Posterior cingulate gyrus (tissue), 11 donors: ENCODE measurements at regions of chr6 and their contacts with region 1.

Region 1: DNA sequence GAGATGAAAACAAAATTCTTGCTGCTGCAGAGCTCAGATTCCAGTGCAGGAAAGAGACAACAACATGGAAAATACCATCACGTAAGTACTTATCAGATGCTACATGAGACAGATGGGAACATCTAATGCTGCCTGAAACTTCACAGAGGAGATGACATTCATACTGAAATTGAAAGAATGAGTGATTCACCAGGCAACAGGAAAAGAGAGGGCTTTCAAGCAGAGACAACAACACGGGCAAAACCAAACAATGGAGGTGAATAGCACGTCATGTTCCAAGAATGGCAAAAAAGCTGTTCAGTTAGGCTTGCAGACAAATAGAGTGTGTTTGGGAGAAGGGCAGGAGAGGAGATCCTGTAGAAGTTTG is 39.3 kb downstream of the GTF2H5 start:
- DNase-seq: no peak

Region 2: DNA sequence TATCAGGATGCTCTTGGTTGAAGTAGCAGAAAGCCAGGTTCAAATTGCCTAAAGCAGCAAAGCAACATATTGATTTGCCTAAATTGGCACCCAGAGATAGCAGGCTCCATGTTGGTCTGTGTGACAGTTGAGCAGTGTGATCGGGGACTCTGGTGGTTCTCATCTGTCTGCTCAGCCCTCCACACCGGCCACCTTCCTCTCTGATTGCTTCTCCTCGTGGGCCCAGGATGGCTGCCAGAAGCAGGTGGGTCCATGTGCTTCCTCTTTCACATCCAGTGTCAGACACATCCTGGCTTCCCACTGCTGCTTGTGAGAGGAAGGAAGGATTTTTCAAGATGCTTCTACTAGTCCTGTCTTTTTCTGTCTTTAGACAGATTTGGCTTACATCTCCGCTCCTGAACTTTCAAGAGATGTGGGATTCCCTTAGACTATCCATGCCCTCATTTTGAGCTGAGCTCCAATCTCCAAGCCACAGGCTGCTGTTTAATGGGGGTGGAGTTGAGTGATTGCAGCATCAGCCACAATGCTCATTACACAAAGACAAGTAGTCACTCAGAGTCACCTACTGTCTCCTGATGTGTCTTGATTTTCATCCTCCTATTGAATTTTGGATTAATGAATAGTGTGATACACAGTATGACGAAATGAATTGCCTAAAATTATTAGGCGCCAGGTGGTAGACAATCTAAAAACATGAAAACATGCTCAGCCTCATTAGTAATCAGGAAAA is 704.2 kb before region 1 on chr6:
- intact Hi-C with region 1: no loop called
- DNase-seq: no peak

Region 3: DNA sequence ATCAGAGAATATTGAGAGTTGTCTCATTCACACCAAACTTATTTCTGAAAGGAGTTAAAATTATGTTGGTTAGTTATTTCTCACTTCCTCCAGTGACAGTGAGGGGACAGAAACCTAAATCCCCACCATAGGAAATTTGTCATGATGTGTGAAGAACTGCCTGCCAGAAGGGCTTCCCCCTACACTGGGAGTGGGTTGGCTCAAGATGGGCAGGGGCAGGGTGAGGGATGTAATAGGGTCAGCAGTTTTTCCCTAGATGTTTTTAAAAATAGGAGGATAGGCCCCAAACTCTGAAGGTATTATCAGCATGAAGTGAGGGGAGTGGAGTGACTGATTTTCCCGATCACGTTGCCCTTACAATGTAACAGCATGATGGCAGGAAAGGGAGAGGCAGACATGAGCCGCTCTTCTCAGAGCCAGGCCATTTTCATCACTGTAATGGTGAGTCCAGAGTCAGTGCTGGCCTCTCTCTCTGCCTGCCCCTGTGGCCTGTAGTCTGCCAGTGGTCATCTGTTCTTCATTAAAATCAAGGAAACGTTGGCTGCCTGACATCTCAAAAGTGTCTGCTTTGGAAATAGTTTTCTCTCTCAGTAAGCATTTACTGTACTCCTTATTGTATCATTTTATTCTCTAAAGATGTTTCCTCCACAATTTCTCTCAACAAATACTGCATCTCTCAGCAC is 285.6 kb before region 1 on chr6:
- intact Hi-C with region 1: no loop called
- DNase-seq: no peak

Region 4: DNA sequence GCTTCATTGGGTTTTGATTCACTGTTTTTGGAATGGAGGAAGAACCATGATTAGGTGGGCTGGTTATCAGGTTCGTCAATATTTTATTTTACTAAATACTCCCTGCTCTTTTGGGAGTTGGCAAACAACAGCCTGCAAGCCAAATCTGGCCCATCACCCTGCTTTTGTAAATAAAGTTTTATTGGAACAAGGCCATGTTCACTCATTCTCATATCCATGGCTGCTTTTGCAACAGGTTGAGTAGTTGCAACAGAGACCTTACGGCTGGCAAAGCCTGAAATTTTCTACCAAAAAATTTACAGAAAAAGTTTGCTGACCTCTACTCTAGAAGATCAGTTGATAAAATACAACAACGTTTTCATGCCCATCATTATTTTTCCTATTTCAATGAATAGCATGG is 487.5 kb after region 1 on chr6:
- intact Hi-C with region 1: loop called (anchors 5 kb)
- DNase-seq: no peak